ENCODE measurements at regions of chr14 and their contacts with region 1.

Region 1: GRCh38 chr14:73058224-73058921 is at the start of gene RBM25:
- DNase-seq: peak; percentile 97
- H3K4me3 Mint-ChIP-seq: no peak within 1 kb of the TSS
- H3K27ac Mint-ChIP-seq: no peak within 1 kb of the TSS
- H3K4me1 Mint-ChIP-seq: peaks cover 34% of the 10 kb centered on the region
- H3K27me3 Mint-ChIP-seq: no peaks in the 10 kb centered on the region
- total RNA-seq, gene RBM25: 89.6 to 97.9 TPM

Region 2: DNA sequence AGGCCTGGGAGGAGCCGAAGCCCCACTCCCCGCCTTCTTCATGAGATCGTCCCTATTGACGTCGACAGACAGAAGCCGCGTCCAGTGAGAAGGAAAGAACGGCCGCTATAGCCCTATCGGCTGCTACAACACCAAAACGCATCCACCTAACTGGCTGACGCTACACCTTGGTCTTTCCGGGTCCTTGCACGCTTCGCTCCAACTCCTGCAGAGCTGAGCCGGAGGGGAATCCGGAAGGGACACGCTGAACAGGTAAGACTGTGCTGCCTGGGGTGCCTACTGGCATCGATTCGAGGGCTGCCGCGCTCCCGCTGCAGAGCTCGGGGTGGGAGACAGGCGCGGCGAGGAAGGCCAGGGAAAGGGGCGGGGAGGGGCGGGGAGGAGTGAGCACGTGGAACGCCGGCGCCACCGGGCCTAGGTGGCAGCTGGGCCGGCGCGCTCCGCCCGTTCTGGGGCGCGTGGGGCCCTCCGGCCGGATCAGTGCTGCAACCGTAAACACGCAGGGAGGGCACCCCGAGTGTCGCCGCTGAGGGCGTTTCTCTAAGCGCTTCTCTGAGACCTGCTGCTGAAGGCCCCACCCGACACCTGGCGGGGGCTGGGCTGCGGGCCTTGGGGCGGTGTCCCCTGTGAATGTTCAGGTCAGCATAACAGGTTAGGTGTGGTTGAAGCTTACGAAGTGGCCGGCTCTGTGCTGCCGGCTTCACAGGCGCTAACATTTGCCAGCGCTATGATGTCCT is 131.9 kb before region 1 on chr14 and contains the start of gene DCAF4:
- CTCF ChIA-PET with region 1: no interaction called
- POLR2A ChIA-PET with region 1: interaction called, 3 read pairs
- intact Hi-C with region 1: loop called (anchors 1 kb)
- DNase-seq: peak; percentile 97
- H3K4me3 Mint-ChIP-seq: peak within 1 kb of the TSS; percentile 91
- H3K27ac Mint-ChIP-seq: peak within 1 kb of the TSS; percentile 69
- H3K4me1 Mint-ChIP-seq: peaks cover 18% of the 10 kb centered on the region
- H3K27me3 Mint-ChIP-seq: peaks cover 2% of the 10 kb centered on the region
- total RNA-seq, gene DCAF4: 13.4 to 13.6 TPM

Region 3: GRCh38 chr14:73026845-73027542 is 31.4 kb before region 1 on chr14 and contains the start of gene ZFYVE1:
- CTCF ChIA-PET with region 1: interaction called, 10 read pairs
- POLR2A ChIA-PET with region 1: interaction called, 19 read pairs
- intact Hi-C with region 1: loop called (anchors 1 kb)
- DNase-seq: peak; percentile 96
- H3K4me3 Mint-ChIP-seq: peak within 1 kb of the TSS; percentile 93
- H3K27ac Mint-ChIP-seq: peak within 1 kb of the TSS; percentile 83
- H3K4me1 Mint-ChIP-seq: peaks cover 37% of the 10 kb centered on the region
- H3K27me3 Mint-ChIP-seq: no peaks in the 10 kb centered on the region
- total RNA-seq, gene ZFYVE1: 9.9 TPM

Region 4: GRCh38 chr14:73153272-73153671 is 94.9 kb after region 1 on chr14:
- CTCF ChIA-PET with region 1: no interaction called
- POLR2A ChIA-PET with region 1: no interaction called
- intact Hi-C with region 1: no loop called
- DNase-seq: no peak
- H3K4me3 Mint-ChIP-seq: no peak overlapping the region
- H3K27ac Mint-ChIP-seq: no peak overlapping the region
- H3K4me1 Mint-ChIP-seq: no peaks in the 10 kb centered on the region
- H3K27me3 Mint-ChIP-seq: no peaks in the 10 kb centered on the region

Region 5: GRCh38 chr14:73458151-73458976 is 400.0 kb after region 1 on chr14 and contains the start of gene NUMB:
- CTCF ChIA-PET with region 1: no interaction called
- POLR2A ChIA-PET with region 1: interaction called, 5 read pairs
- intact Hi-C with region 1: loop called (anchors 1 kb)
- DNase-seq: peak; percentile 98
- H3K4me3 Mint-ChIP-seq: peak within 1 kb of the TSS; percentile 100
- H3K27ac Mint-ChIP-seq: peak within 1 kb of the TSS; percentile 94
- H3K4me1 Mint-ChIP-seq: peaks cover 44% of the 10 kb centered on the region
- H3K27me3 Mint-ChIP-seq: no peaks in the 10 kb centered on the region
- total RNA-seq, gene NUMB: 45.0 to 46.9 TPM

Region 6: DNA sequence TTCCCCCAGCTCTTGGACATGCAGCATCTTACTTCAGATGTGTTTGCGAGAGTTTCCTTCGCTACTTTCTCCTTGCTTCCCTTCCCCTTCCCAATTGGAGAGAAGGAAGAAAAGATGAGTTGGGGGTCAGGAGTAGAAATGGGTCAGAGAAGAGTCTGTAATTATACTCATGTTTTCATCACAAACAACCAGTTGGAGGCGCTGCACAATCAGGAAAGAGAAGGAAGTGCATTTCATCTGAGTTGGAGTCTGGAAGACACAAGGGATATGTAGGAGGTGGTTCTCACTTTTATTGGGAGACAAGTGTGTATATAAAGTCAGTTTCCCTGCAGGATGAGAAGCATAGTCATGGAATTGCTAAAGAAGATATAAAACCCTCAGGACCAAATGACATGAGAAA is 1149.6 kb after region 1 on chr14:
- CTCF ChIA-PET with region 1: no interaction called
- POLR2A ChIA-PET with region 1: no interaction called
- intact Hi-C with region 1: no loop called
- DNase-seq: no peak
- H3K4me3 Mint-ChIP-seq: no peak overlapping the region
- H3K27ac Mint-ChIP-seq: no peak overlapping the region
- H3K4me1 Mint-ChIP-seq: no peaks in the 10 kb centered on the region
- H3K27me3 Mint-ChIP-seq: peaks cover 6% of the 10 kb centered on the region

Region 7: DNA sequence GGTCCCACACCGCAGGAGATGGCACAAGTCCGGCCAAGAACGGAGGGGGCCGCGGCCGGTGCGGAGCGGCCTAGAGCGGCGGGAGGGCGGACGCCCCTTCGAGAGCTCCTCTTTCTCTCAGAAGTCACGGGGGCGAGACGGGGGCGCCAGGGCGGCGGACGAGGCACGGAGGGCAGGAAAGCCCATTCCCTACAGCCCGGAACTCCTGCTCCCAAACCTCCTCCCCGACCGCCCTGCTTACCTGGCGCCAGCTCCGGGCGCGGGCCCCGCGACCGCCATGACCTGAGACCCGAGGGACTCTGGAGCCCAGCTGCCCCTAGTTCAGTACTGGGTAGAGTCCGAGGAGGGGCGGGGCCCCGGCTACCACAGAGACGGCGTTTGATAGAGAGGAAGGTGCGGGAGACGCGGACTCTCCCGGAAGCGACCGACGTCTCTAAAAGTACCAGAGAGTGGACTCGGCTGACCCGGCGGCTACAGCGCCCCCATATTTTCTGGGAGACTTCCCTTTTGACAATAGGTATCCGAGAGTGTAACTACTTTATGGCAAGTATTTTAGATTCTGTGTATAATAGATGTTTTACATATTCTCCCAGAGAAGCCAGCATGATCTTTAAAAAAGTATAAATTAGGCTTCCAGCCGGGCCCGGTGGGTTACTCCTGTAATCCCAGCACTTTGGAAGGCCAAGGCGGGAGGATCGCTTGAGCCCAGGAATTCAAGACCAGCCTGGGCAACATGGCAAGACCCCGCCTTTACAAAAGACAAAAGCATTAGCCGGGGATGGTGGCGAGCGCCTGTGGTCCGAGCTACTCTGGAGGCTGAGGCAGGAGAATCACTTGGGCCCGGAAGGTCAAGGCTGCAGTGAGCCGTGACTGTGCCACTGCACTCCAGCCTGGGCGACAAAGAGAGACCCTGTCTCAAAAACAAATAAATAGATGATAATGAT is 1244.5 kb after region 1 on chr14 and contains the start of gene ABCD4:
- CTCF ChIA-PET with region 1: no interaction called
- POLR2A ChIA-PET with region 1: no interaction called
- intact Hi-C with region 1: loop called (anchors 10 kb)
- DNase-seq: peak; percentile 92
- H3K4me3 Mint-ChIP-seq: peak within 1 kb of the TSS; percentile 100
- H3K27ac Mint-ChIP-seq: peak within 1 kb of the TSS; percentile 94
- H3K4me1 Mint-ChIP-seq: peaks cover 32% of the 10 kb centered on the region
- H3K27me3 Mint-ChIP-seq: no peaks in the 10 kb centered on the region
- total RNA-seq, gene ABCD4: 42.7 to 47.7 TPM